Posterior vena cava (tissue), 2 donors: ENCODE measurements at regions of chrX and their contacts with region 1.

Region 1: GRCh38 chrX:148670277-148670676 is 169.9 kb downstream of the AFF2 start:
- DNase-seq: no peak

Region 2: DNA sequence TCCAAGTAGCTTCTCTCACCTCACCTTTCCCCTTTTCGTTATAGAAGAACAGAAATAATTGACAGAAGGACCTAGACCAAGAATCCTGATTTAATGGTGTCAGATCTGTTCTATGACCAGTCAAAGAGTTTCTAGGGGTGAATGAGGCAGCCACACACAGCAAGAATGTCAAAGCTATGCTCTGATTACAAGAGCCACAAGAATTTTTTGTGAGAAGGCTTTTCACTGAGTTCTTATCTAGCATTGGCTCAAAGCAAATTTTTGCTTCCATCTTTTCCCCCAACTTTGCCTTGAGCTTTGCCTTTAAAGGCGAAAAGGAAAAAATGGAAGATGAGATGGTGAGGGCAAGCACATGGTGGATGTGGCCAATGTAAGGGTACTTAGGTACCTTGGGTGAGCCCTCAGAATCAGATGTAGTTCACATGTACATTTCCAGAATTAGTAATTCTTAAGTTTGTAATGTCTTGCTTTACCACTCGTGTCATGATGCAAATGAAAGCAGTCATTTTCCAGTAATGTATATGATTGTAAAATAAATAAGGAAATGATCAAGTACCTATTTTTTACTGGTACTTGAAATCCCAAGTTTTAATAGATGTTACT is 735.0 kb before region 1 on chrX:
- intact Hi-C with region 1: no loop called
- DNase-seq: no peak

Region 3: GRCh38 chrX:149286940-149287349 is 616.7 kb after region 1 on chrX:
- intact Hi-C with region 1: loop called in 1 of 2 experiments (anchors 5 kb)
- DNase-seq: no peak